ENCODE measurements at regions of chr6 and their contacts with region 1.

Region 1: GRCh38 chr6:130697995-130698535 is 129.1 kb upstream of the SMLR1 start:
- DNase-seq: peak in 37 of 42 donors; percentile 7 to 73 (median 43)

Region 2: DNA sequence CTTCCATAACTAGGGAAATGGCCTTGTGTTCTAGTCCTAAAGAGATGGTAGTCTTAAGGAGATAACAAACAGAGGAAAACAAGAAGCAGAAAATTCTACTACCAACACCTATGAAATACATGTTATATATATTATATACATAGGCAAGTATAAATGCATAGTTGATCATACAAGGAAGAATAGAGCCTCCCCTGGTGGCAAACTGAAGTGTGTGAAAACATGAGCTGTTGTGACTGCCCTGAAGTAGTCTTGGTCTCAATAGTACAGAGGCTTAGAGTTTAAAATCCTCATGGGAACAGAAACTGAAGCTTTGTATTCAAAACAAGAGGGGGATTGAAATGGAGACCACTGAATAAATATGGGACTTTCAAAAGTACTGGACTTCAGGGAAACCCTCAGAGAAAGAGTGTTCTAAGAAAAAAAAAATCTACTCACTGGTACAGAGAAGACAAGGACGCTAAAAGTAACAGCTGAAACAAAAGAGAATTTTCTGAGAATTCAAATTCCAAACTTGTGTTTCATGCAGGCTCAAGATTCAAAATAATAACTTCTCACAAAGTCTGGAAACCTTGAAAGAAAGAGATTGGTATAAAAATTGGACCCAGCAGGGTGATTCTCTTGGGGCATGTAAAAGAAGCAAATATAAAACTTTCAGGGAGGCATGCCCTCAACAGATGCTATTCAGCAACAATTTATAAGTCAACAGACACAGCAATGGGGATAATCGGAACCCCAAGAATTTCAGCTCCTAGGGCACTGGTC is 415.6 kb before region 1 on chr6:
- intact Hi-C with region 1: no loop called
- DNase-seq: no peak

Region 3: DNA sequence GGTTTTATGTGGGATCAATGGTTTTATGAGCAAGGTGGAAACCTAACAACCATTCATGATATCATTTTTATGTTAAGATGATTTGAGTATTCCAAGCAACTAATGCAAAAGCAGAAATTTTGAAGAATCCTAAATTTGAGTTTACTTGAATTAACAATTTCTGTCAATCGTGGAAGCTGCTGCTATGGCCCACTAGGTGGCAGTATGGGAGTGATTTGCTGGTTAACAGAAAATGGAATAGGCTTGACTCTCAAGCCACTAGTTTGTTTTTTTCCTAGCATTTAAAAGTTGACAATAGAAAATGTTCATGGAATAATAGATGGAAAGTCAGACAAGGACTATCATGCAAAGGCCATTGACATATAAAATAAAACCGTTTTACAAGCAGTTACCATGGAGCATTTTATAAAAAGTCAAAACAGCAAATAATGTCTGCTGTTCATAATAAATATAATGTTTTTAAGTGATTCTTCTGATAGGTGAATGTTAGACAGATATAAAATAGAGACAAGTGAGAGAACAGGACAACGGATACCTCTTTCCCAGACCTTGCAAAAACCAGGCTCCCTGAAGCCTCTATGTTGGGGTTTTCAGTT is 375.3 kb before region 1 on chr6:
- intact Hi-C with region 1: loop called (anchors 10 kb)
- DNase-seq: peak; percentile 9 to 83 (median 56)

Region 4: GRCh38 chr6:130381459-130382380 is 316.3 kb before region 1 on chr6:
- intact Hi-C with region 1: no loop called
- DNase-seq: no peak

Region 5: DNA sequence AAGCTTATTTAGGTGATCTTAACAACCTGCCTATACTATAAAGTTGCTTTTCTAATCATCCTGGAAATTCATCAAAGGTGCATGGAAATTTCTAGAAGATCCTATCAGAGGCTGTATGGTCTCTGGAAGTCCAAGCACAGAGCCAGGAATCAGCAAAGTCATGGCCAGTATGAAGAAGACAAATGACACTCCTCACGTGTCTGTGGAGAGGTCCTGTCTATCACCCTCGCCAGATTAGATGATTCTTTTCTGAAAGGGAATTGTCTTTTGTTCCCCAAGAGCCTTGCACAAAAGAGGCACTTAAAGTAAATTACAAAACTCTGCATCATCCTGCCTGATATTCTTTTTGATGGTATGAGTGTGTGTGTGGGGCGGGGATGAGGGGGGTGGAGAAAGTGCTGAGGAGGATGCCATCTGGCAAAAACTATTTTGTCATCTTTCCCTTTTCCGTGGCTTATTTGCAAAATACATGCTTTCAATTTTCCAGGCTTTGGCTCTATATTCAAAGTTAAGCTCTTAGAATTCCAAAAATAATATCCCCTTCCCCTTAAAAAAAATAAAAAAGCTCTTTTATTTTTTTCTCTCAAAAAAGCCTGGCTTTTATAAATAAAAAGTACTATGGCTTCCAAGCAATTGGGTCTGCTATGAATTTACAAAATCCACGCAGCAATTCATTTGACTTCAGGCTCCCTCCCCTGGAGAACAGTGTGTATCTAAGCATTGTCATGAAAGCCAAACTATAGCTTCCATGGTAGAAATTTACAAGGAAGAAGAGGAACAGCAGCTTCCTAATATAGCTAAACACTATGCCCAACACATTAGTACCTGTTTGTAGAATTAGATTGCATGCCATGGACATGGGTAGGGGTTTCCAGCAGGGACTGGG is 689.7 kb after region 1 on chr6:
- intact Hi-C with region 1: no loop called
- DNase-seq: peak in 1 of 42 donors; percentile 5

Measured in head of caudate nucleus (tissue), 42 donors.